ENCODE measurements at regions of chr15 and their contacts with region 1.

Region 1: GRCh38 chr15:58077427-58077826 is 11.9 kb upstream of the ALDH1A2 start:
- DNase-seq: peak; percentile 36
- H3K4me3 Mint-ChIP-seq: no peak overlapping the region
- H3K27ac Mint-ChIP-seq: no peak overlapping the region
- H3K4me1 Mint-ChIP-seq: peaks cover 8% of the 10 kb centered on the region
- H3K27me3 Mint-ChIP-seq: no peaks in the 10 kb centered on the region
- CTCF ChIP-seq: peak; percentile 49

Region 2: DNA sequence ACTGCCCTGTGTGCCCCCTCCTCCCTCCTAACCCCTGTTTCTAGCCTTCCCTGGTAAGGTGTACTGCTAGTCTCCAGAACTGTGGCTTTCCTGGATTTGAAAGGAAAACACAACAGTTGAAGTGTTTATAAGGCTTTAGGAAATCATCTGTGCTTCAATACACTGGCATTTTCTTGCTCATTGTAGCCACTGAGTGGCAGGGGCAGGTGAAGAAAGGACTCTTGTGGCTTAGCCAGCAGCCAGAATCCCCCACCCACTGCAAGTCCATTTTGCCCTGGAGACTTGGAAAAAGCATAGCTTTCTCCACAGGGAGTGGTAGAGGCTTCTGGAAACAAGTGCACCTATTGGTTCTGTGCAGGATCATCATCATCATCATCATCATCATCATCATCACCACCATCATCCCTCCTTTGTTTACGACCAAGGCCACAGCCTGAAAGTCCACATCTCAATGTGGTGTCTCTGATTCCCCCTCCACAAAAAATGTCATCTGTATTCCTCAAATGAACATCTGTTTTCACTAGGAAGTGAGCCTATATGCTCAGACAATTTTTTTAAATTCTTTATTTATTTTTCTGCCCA is 94.1 kb after region 1 on chr15:
- CTCF ChIA-PET with region 1: interaction called, 16 read pairs
- POLR2A ChIA-PET with region 1: no interaction called
- intact Hi-C with region 1: no loop called
- DNase-seq: no peak
- H3K4me3 Mint-ChIP-seq: no peak overlapping the region
- H3K27ac Mint-ChIP-seq: no peak overlapping the region
- H3K4me1 Mint-ChIP-seq: no peaks in the 10 kb centered on the region
- H3K27me3 Mint-ChIP-seq: peaks cover 35% of the 10 kb centered on the region
- CTCF ChIP-seq: no peak

Region 3: GRCh38 chr15:58212909-58213526 is 135.6 kb after region 1 on chr15:
- CTCF ChIA-PET with region 1: interaction called, 10 read pairs
- POLR2A ChIA-PET with region 1: no interaction called
- intact Hi-C with region 1: no loop called
- DNase-seq: peak; percentile 50
- H3K4me3 Mint-ChIP-seq: no peak overlapping the region
- H3K27ac Mint-ChIP-seq: no peak overlapping the region
- H3K4me1 Mint-ChIP-seq: peaks cover 33% of the 10 kb centered on the region
- H3K27me3 Mint-ChIP-seq: no peaks in the 10 kb centered on the region
- CTCF ChIP-seq: peak; percentile 35

Region 4: DNA sequence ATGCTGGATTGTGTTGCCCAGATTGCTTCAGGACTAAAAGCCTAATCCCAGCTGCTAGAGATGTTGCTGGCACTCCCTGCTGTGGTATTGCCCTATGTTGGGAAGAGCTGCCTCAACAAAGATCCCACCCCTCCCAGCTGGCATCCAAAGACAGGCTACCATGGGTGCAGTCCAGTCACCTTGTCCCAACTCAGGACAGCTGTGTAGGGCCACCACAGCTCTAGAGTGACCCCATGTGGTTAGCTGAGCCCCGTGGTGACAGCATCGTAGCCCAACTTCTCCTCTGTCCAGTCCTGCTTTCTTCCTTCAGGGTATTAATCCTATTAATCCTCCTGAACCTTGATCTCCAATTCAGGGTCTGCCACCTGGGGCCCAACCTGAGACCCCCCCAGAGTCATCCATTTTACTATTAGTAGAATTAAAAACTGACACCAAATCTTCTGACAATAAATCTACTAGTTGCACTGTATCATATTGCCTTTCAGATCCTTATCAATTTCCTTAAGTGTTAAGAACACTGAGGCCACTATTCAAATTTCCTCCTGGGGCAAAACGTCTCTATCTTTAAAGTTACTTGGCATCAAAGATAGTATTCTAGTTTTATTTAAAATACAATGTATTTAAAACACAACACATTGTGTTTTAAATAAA is 144.3 kb after region 1 on chr15:
- CTCF ChIA-PET with region 1: interaction called, 10 read pairs
- POLR2A ChIA-PET with region 1: no interaction called
- intact Hi-C with region 1: loop called (anchors 1 kb)
- DNase-seq: peak; percentile 62
- H3K4me3 Mint-ChIP-seq: no peak overlapping the region
- H3K27ac Mint-ChIP-seq: no peak overlapping the region
- H3K4me1 Mint-ChIP-seq: no peaks in the 10 kb centered on the region
- H3K27me3 Mint-ChIP-seq: no peaks in the 10 kb centered on the region
- CTCF ChIP-seq: peak; percentile 50